CD8-positive, alpha-beta T cell (primary cell): ENCODE measurements at regions of chr13 and their contacts with region 1.

Region 1: DNA sequence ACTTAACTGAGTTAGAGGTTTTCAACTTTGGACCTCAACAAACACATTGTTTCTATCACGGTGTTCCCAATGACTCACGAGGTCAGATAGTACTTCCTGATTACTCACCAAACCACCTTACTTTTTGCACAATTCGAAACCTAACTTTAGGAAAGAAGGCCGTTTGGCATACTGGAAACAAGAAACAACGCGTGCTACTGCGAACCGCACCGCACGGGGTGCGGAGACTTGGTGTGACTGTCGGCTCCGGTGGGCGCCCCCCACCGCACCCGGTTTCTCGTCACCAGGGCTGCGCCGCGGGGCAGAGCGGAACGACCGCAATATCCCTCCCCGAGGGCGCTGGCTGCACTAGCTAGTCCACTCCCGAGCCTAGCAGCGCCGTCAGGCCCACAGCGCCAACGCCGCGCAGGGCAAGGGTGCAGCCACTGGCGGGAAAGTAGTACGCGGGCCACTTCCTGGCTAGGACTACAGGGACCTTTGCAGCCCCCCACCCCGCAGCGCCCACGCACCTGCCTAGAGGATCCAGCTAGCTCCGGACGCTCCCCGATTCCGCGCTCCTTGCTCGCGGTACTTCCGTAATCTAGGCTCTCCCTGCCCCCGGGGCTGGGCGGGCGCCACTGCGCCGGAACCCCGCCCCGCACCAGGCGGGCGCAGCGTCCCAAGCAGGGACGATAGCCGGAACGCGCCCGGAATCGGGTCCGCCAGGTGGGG is at the start of gene PARP4:
- DNase-seq: peak in 8 of 9 experiments; percentile 53 to 84 (median 66)
- ATAC-seq: peak; percentile 71
- H3K4me3 ChIP-seq: peak within 1 kb of the TSS; percentile 70 to 98
- H3K4me3 Mint-ChIP-seq: peak within 1 kb of the TSS; percentile 87
- H3K27ac ChIP-seq: peak within 1 kb of the TSS; percentile 66 to 83
- H3K27ac Mint-ChIP-seq: peak within 1 kb of the TSS; percentile 92
- H3K4me1 ChIP-seq: peaks cover 12% of the 10 kb centered on the region
- H3K4me1 Mint-ChIP-seq: peaks cover 31% of the 10 kb centered on the region
- H3K27me3 ChIP-seq: no peaks in the 10 kb centered on the region
- H3K27me3 Mint-ChIP-seq: no peaks in the 10 kb centered on the region
- CTCF ChIP-seq: no peak
- total RNA-seq, gene PARP4: 20.1 to 21.8 TPM

Region 2: DNA sequence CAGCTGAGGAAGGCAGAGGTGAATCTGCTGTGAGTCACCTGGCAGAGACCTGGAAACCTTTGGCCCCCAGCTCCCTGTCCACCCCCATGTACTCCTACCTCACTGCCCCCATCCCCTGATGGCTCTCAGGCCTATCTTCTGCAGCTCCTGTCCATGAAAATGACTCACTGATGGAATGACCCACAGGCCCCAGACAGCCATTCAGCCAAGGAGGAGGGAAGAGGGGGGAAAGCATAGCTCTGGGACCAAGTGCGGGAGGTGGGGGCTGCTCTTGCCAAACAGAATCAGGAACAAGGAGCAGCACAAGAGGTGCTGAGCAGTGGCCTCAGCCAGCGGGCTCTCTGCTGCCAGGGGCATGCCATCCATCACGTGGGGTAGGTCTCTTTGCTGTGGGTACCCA is 503.7 kb before region 1 on chr13:
- CTCF ChIA-PET with region 1: no interaction called
- POLR2A ChIA-PET with region 1: no interaction called
- intact Hi-C with region 1: no loop called
- DNase-seq: no peak
- ATAC-seq: no peak
- H3K4me3 ChIP-seq: no peak overlapping the region
- H3K4me3 Mint-ChIP-seq: no peak overlapping the region
- H3K27ac ChIP-seq: no peak overlapping the region
- H3K27ac Mint-ChIP-seq: no peak overlapping the region
- H3K4me1 ChIP-seq: no peaks in the 10 kb centered on the region
- H3K4me1 Mint-ChIP-seq: no peaks in the 10 kb centered on the region
- H3K27me3 ChIP-seq: no peaks in the 10 kb centered on the region
- H3K27me3 Mint-ChIP-seq: peaks cover 7% of the 10 kb centered on the region
- CTCF ChIP-seq: no peak

Region 3: GRCh38 chr13:24443366-24443765 is 69.0 kb before region 1 on chr13:
- CTCF ChIA-PET with region 1: no interaction called
- POLR2A ChIA-PET with region 1: no interaction called
- intact Hi-C with region 1: no loop called
- DNase-seq: no peak
- ATAC-seq: no peak
- H3K4me3 ChIP-seq: no peak overlapping the region
- H3K4me3 Mint-ChIP-seq: no peak overlapping the region
- H3K27ac ChIP-seq: no peak overlapping the region
- H3K27ac Mint-ChIP-seq: peak overlapping the region; percentile 8
- H3K4me1 ChIP-seq: no peaks in the 10 kb centered on the region
- H3K4me1 Mint-ChIP-seq: no peaks in the 10 kb centered on the region
- H3K27me3 ChIP-seq: no peaks in the 10 kb centered on the region
- H3K27me3 Mint-ChIP-seq: no peaks in the 10 kb centered on the region
- CTCF ChIP-seq: no peak

Region 4: GRCh38 chr13:24459234-24459633 is 53.1 kb before region 1 on chr13:
- CTCF ChIA-PET with region 1: no interaction called
- POLR2A ChIA-PET with region 1: no interaction called
- intact Hi-C with region 1: no loop called
- DNase-seq: no peak
- ATAC-seq: no peak
- H3K4me3 ChIP-seq: no peak overlapping the region
- H3K4me3 Mint-ChIP-seq: no peak overlapping the region
- H3K27ac ChIP-seq: no peak overlapping the region
- H3K27ac Mint-ChIP-seq: no peak overlapping the region
- H3K4me1 ChIP-seq: no peaks in the 10 kb centered on the region
- H3K4me1 Mint-ChIP-seq: peaks cover 18% of the 10 kb centered on the region
- H3K27me3 ChIP-seq: no peaks in the 10 kb centered on the region
- H3K27me3 Mint-ChIP-seq: no peaks in the 10 kb centered on the region
- CTCF ChIP-seq: no peak

Region 5: GRCh38 chr13:24618014-24618955 is 105.9 kb after region 1 on chr13:
- CTCF ChIA-PET with region 1: no interaction called
- POLR2A ChIA-PET with region 1: no interaction called
- intact Hi-C with region 1: loop called in 1 of 2 experiments (anchors 2 kb)
- DNase-seq: peak; percentile 26 to 95 (median 72)
- ATAC-seq: peak; percentile 84
- H3K4me3 ChIP-seq: no peak overlapping the region
- H3K4me3 Mint-ChIP-seq: peak overlapping the region; percentile 4
- H3K27ac ChIP-seq: peak overlapping the region; percentile 54 to 77
- H3K27ac Mint-ChIP-seq: peak overlapping the region; percentile 91
- H3K4me1 ChIP-seq: peaks cover 28% of the 10 kb centered on the region
- H3K4me1 Mint-ChIP-seq: peaks cover 36% of the 10 kb centered on the region
- H3K27me3 ChIP-seq: no peaks in the 10 kb centered on the region
- H3K27me3 Mint-ChIP-seq: no peaks in the 10 kb centered on the region
- CTCF ChIP-seq: no peak